ENCODE measurements at regions of chr3 and their contacts with region 1.

Region 1: DNA sequence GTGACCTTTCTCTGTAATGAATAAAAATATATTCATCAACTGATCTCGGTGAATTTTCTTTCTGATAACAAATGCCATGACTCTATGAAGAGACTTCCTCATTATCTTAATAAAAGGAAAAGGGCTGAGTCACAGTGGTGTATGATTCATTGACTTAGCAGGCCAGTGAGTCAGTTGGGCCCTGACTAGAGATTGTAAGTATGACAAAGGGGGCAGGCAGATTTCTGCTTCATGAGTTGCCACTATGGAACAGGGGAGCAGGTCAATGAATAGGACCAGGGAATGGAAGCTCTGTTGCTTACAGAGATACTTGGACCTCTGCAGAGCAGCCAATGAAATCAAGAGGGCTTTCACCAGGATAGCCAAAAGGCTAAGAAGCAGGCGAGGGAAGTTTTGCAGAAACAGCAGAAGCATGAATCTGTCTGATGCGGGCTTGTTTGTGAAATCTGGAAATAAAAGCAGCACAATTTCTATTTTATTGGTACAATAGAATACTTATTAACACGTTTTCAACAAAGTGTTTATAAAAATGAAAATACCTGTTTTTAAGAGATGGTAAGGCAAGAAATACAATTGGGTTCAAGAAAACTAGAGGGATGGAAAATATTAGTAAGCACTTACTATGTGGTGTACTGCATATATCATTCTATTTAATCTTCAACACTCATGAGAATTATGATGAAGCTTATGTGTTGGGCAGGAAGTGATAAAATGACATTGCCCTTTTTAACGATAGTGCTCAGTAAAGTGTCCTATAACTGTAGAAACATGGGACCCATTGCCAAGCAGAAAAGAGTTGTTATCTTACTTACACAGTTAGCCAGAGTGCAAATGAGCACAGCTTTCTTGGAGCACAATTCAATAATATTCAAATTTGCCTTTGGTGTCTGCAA is 169.8 kb upstream of the MYRIP start:
- DNase-seq: peak; percentile 44
- H3K4me3 Mint-ChIP-seq: no peak overlapping the region
- H3K27ac Mint-ChIP-seq: no peak overlapping the region
- H3K4me1 Mint-ChIP-seq: peaks cover 12% of the 10 kb centered on the region
- H3K27me3 Mint-ChIP-seq: peaks cover 14% of the 10 kb centered on the region

Region 2: GRCh38 chr3:39657775-39658174 is 18.2 kb after region 1 on chr3:
- CTCF ChIA-PET with region 1: no interaction called
- intact Hi-C with region 1: no loop called
- DNase-seq: no peak
- H3K4me3 Mint-ChIP-seq: no peak overlapping the region
- H3K27ac Mint-ChIP-seq: no peak overlapping the region
- H3K4me1 Mint-ChIP-seq: no peaks in the 10 kb centered on the region
- H3K27me3 Mint-ChIP-seq: peaks cover 8% of the 10 kb centered on the region

Region 3: GRCh38 chr3:40309418-40309924 is 669.9 kb after region 1 on chr3 and contains the start of gene EIF1B:
- CTCF ChIA-PET with region 1: no interaction called
- intact Hi-C with region 1: loop called (anchors 2 kb)
- DNase-seq: peak; percentile 99
- H3K4me3 Mint-ChIP-seq: peak within 1 kb of the TSS; percentile 99
- H3K27ac Mint-ChIP-seq: peak within 1 kb of the TSS; percentile 98
- H3K4me1 Mint-ChIP-seq: peaks cover 24% of the 10 kb centered on the region
- H3K27me3 Mint-ChIP-seq: no peaks in the 10 kb centered on the region
- total RNA-seq, gene EIF1B: 47.0 to 49.2 TPM